GM23248 (cell line): ENCODE measurements at regions of chr7 and their contacts with region 1.

Region 1: GRCh38 chr7:127137146-127137545 is 115.6 kb downstream of the GRM8 start:
- DNase-seq: no peak
- H3K4me3 ChIP-seq: no peak overlapping the region
- H3K27ac ChIP-seq: no peak overlapping the region
- H3K4me1 ChIP-seq: no peaks in the 10 kb centered on the region
- H3K27me3 ChIP-seq: no peaks in the 10 kb centered on the region

Region 2: GRCh38 chr7:126780993-126781392 is 356.2 kb before region 1 on chr7:
- in situ Hi-C with region 1: no loop called
- DNase-seq: no peak
- H3K4me3 ChIP-seq: no peak overlapping the region
- H3K27ac ChIP-seq: no peak overlapping the region
- H3K4me1 ChIP-seq: no peaks in the 10 kb centered on the region
- H3K27me3 ChIP-seq: no peaks in the 10 kb centered on the region

Region 3: DNA sequence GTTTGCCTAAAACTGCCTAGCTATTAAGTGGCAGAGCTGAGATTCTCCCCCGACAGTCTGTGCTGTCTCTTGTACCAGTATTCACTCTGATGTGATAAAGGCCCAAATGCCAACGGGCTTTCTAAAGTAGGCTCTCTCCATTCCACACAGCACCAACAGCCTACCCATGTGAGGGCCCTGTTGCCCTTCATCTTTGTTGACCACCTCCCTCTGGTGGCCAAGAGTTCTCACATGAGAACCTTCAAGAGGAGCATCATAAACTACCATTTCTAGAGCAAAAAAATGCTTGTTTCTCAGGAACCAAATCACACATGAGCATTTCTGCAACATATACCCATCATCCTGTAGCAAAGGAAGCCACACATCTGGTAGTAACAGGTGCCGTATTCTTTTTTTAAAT is 70.2 kb before region 1 on chr7:
- in situ Hi-C with region 1: loop called (anchors 10 kb)
- DNase-seq: no peak
- H3K4me3 ChIP-seq: no peak overlapping the region
- H3K27ac ChIP-seq: no peak overlapping the region
- H3K4me1 ChIP-seq: no peaks in the 10 kb centered on the region
- H3K27me3 ChIP-seq: no peaks in the 10 kb centered on the region